CD8-positive, alpha-beta memory T cell (primary cell): ENCODE measurements at regions of chrX and their contacts with region 1.

Region 1: DNA sequence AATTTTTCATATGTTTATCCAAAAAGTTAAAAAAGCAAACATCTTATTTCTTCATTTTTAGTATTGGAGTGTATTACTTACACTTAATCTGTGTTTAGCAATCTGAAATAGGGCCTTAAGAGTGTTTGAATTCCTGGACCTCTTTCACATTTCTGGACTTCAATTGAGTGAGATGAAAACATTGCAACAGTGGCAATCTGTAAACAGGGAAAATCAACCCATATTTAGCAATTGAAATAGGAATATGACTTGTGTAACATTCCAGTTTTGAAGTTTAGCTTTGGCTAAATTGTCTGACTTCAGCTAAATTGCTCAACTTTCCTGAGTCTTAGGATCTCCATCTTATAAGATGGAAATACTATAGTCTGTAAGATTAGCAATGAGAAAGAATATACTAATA is 34.6 kb upstream of the FHL1 start:
- DNase-seq: no peak
- H3K4me3 ChIP-seq: no peak overlapping the region
- H3K4me3 Mint-ChIP-seq: no peak overlapping the region
- H3K27ac ChIP-seq: no peak overlapping the region
- H3K27ac Mint-ChIP-seq: no peak overlapping the region
- H3K4me1 ChIP-seq: no peaks in the 10 kb centered on the region
- H3K4me1 Mint-ChIP-seq: no peaks in the 10 kb centered on the region
- H3K27me3 ChIP-seq: no peaks in the 10 kb centered on the region
- H3K27me3 Mint-ChIP-seq: peaks cover 0 to 11% of the 10 kb centered on the region in 2 donors

Region 2: GRCh38 chrX:136143711-136144110 is 30.9 kb after region 1 on chrX:
- CTCF ChIA-PET with region 1: no interaction called
- POLR2A ChIA-PET with region 1: interaction called, 17 read pairs
- DNase-seq: peak in 2 of 5 donors; percentile 5 to 44
- H3K4me3 ChIP-seq: no peak overlapping the region
- H3K4me3 Mint-ChIP-seq: peak overlapping the region; percentile 69 to 85 (median 76)
- H3K27ac ChIP-seq: no peak overlapping the region
- H3K27ac Mint-ChIP-seq: peak overlapping the region; percentile 43 to 87 (median 72)
- H3K4me1 ChIP-seq: peaks cover 21% of the 10 kb centered on the region
- H3K4me1 Mint-ChIP-seq: peaks cover 17 to 38% (median 30%) of the 10 kb centered on the region in 3 donors
- H3K27me3 ChIP-seq: no peaks in the 10 kb centered on the region
- H3K27me3 Mint-ChIP-seq: peaks cover 0 to 14% of the 10 kb centered on the region in 2 donors